ENCODE measurements at regions of chr3 and their contacts with region 1.

Region 1: DNA sequence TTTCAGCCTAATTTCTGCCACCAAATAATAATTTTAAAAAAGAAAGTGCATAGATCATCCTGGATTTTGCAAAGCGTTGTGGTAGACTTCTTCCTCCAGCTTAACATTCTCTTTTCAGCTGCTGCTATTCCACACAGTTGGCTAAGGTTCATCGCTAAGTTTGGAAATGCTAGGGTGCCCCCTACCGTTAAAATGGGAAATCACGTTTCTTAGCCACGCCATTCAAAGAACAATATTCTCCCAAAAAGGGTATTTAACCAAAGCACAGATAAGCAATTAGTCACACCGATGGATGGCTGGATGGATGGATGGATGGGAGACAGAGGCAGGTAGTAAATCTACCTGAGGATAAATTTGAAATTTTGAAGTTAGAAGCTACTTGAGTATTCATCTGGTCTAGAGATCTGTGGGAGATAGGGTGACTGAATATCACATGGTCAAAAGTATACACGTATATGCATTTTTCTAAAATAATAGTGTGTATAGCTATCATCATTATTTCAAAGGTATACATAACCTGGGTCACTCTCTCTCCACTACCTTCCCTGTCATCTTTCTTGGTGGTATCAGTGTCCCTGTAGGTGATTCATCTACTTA is 67.2 kb downstream of the EFHB start:
- DNase-seq: peak; percentile 74
- ATAC-seq: peak; percentile 71
- H3K4me3 ChIP-seq: no peak overlapping the region
- H3K4me3 Mint-ChIP-seq: no peak overlapping the region
- H3K27ac ChIP-seq: no peak overlapping the region
- H3K27ac Mint-ChIP-seq: no peak overlapping the region
- H3K4me1 ChIP-seq: peaks cover 0 to 3% of the 10 kb centered on the region in 2 donors
- H3K4me1 Mint-ChIP-seq: peaks cover 2% of the 10 kb centered on the region
- H3K27me3 ChIP-seq: no peaks in the 10 kb centered on the region
- H3K27me3 Mint-ChIP-seq: peaks cover 8% of the 10 kb centered on the region
- CTCF ChIP-seq: peak; percentile 93

Region 2: GRCh38 chr3:18559331-18559842 is 1307.5 kb before region 1 on chr3:
- CTCF ChIA-PET with region 1: interaction called, 7 read pairs
- POLR2A ChIA-PET with region 1: no interaction called
- intact Hi-C with region 1: loop called (anchors 5 kb)
- DNase-seq: peak; percentile 63
- ATAC-seq: peak; percentile 67
- H3K4me3 ChIP-seq: no peak overlapping the region
- H3K4me3 Mint-ChIP-seq: no peak overlapping the region
- H3K27ac ChIP-seq: no peak overlapping the region
- H3K27ac Mint-ChIP-seq: no peak overlapping the region
- H3K4me1 ChIP-seq: peaks cover 6 to 10% of the 10 kb centered on the region in 2 donors
- H3K4me1 Mint-ChIP-seq: peaks cover 17% of the 10 kb centered on the region
- H3K27me3 ChIP-seq: no peaks in the 10 kb centered on the region
- H3K27me3 Mint-ChIP-seq: peaks cover 5% of the 10 kb centered on the region
- CTCF ChIP-seq: peak; percentile 83

Region 3: DNA sequence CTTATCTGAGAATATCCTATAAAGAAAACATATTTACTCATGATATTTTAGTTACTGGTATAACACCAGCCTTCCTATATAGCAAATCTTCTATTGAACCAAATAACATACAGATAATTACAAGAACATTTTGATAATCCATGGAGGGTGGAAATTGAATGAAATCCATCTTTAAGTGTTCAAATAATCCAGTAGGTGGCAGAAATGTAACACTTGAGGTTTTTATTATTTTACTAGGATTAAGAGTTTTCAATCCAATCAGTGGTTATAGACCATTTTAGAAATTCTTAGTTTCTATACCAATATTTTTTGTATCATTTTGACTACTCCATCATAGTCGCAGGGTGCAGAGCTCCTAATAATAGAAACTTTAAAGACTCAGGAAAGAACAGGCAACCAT is 820.4 kb before region 1 on chr3:
- CTCF ChIA-PET with region 1: interaction called, 17 read pairs
- POLR2A ChIA-PET with region 1: no interaction called
- intact Hi-C with region 1: loop called (anchors 1 kb)
- DNase-seq: peak; percentile 8
- ATAC-seq: no peak
- H3K4me3 ChIP-seq: no peak overlapping the region
- H3K4me3 Mint-ChIP-seq: no peak overlapping the region
- H3K27ac ChIP-seq: no peak overlapping the region
- H3K27ac Mint-ChIP-seq: no peak overlapping the region
- H3K4me1 ChIP-seq: no peaks in the 10 kb centered on the region
- H3K4me1 Mint-ChIP-seq: no peaks in the 10 kb centered on the region
- H3K27me3 ChIP-seq: no peaks in the 10 kb centered on the region
- H3K27me3 Mint-ChIP-seq: no peaks in the 10 kb centered on the region
- CTCF ChIP-seq: peak; percentile 49

Region 4: GRCh38 chr3:19146685-19147650 is 719.9 kb before region 1 on chr3:
- CTCF ChIA-PET with region 1: interaction called, 18 read pairs
- POLR2A ChIA-PET with region 1: no interaction called
- intact Hi-C with region 1: loop called (anchors 2 kb)
- DNase-seq: peak; percentile 89
- ATAC-seq: peak; percentile 63
- H3K4me3 ChIP-seq: peak overlapping the region; percentile 49 to 84 (median 68)
- H3K4me3 Mint-ChIP-seq: peak overlapping the region; percentile 95
- H3K27ac ChIP-seq: peak overlapping the region; percentile 50 to 80
- H3K27ac Mint-ChIP-seq: peak overlapping the region; percentile 91
- H3K4me1 ChIP-seq: peaks cover 18 to 22% of the 10 kb centered on the region in 2 donors
- H3K4me1 Mint-ChIP-seq: peaks cover 24% of the 10 kb centered on the region
- H3K27me3 ChIP-seq: peaks cover 0 to 5% (median 2%) of the 10 kb centered on the region in 4 experiments
- H3K27me3 Mint-ChIP-seq: peaks cover 13% of the 10 kb centered on the region
- CTCF ChIP-seq: peak; percentile 72

Region 5: GRCh38 chr3:19543212-19543841 is 323.5 kb before region 1 on chr3:
- CTCF ChIA-PET with region 1: interaction called, 4 read pairs
- POLR2A ChIA-PET with region 1: no interaction called
- intact Hi-C with region 1: loop called (anchors 5 kb)
- DNase-seq: peak; percentile 59
- ATAC-seq: peak; percentile 53
- H3K4me3 ChIP-seq: peak overlapping the region in 2 of 5 experiments; percentile 17 to 36
- H3K4me3 Mint-ChIP-seq: peak overlapping the region; percentile 16
- H3K27ac ChIP-seq: peak overlapping the region; percentile 93
- H3K27ac Mint-ChIP-seq: peak overlapping the region; percentile 60
- H3K4me1 ChIP-seq: peaks cover 55 to 56% of the 10 kb centered on the region in 2 donors
- H3K4me1 Mint-ChIP-seq: peaks cover 64% of the 10 kb centered on the region
- H3K27me3 ChIP-seq: no peaks in the 10 kb centered on the region
- H3K27me3 Mint-ChIP-seq: no peaks in the 10 kb centered on the region
- CTCF ChIP-seq: peak; percentile 81

Region 6: GRCh38 chr3:19816631-19817030 is 50.2 kb before region 1 on chr3:
- CTCF ChIA-PET with region 1: no interaction called
- POLR2A ChIA-PET with region 1: no interaction called
- intact Hi-C with region 1: no loop called
- DNase-seq: no peak
- ATAC-seq: no peak
- H3K4me3 ChIP-seq: no peak overlapping the region
- H3K4me3 Mint-ChIP-seq: no peak overlapping the region
- H3K27ac ChIP-seq: no peak overlapping the region
- H3K27ac Mint-ChIP-seq: no peak overlapping the region
- H3K4me1 ChIP-seq: no peaks in the 10 kb centered on the region
- H3K4me1 Mint-ChIP-seq: no peaks in the 10 kb centered on the region
- H3K27me3 ChIP-seq: no peaks in the 10 kb centered on the region
- H3K27me3 Mint-ChIP-seq: no peaks in the 10 kb centered on the region
- CTCF ChIP-seq: no peak

Measured in B cell (primary cell).